Mammary epithelial cell (primary cell): ENCODE measurements at regions of chr17 and their contacts with region 1.

Region 1: DNA sequence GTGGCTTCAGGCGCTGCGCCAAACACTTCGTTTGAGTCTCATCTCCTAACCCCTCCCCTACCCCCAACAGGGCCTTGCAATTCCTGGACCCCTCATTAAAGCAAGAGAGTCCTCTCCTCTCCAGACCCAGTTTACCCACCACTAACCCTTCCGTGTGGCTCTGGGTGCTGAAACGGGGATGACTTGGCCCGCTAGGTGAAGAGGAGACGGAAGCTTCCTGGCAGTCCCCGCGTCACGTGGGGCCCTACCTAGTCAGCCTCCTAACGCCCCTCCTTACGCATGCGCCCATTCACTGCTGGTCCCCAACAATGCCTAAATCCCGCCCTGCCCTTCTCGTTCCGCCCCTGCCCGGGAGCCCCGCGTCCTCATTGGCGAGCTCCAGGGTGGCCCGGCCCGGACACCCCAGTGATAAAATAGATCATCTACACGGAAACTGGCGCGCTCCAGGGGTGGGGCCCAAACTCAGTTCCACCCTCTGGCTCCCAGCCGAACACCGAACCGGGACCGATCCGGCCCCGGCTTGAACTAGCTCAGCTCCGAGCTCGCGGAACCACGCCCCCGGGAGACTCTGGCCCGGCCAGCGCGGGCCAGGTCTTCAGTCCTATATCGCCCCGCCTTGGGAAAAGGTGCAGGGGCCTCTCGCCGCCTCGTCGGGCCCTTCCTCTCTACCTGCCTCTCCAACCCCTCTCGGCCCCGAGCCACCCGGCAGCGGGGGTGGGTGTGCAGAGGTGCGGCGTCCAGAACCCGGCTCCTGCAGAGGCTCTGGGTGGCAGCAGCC is at the start of gene SLC16A13:
- DNase-seq: peak; percentile 99
- H3K4me3 ChIP-seq: peak within 1 kb of the TSS; percentile 65 to 71 (median 70)
- H3K27ac ChIP-seq: peak within 1 kb of the TSS; percentile 81
- H3K4me1 ChIP-seq: peaks cover 12% of the 10 kb centered on the region
- H3K27me3 ChIP-seq: no peaks in the 10 kb centered on the region
- CTCF ChIP-seq: no peak
- total RNA-seq, gene SLC16A13: 2.7 to 11.9 TPM

Region 2: GRCh38 chr17:7072406-7072805 is 36.6 kb after region 1 on chr17:
- CTCF ChIA-PET with region 1: no interaction called
- dilution Hi-C with region 1: loop called (anchors 5 kb)
- in situ Hi-C with region 1: no loop called
- intact Hi-C with region 1: no loop called
- DNase-seq: no peak
- H3K4me3 ChIP-seq: no peak overlapping the region
- H3K27ac ChIP-seq: no peak overlapping the region
- H3K4me1 ChIP-seq: no peaks in the 10 kb centered on the region
- H3K27me3 ChIP-seq: no peaks in the 10 kb centered on the region
- CTCF ChIP-seq: no peak

Region 3: DNA sequence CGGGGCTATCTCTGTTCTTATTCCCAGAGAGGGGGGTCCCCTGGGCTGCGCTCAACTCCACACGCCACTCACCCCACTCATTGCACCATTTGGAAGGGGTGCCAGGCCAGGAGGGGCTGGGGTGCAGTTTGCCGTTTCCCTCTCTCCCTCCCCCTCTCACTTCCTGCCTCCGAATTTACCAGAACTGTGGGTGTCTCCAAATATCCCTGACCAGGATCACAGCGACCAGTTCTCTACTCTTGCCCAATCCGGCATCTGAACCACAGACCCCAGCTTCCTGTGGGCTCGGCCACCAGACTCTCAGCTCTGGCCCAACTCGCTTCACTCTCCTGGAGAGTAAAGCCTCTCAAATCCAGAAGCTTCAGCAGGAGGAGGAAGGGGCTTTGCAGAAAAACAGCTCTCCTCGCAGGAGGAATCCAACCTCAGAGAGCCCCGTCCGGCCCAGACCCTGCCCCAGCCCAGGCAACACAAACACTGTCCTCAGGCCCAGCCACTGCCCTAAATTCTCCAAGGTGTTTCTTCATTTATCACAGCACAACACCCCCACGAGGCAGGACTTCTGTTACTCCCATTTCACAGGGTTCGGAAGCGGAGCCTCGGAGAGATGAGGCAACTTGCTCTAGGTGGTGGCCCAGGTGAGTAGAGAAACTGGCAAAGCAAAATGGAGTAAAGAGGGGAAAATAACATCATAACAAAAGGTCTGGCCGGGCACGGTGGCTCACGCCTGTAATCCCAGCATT is 79.3 kb after region 1 on chr17:
- CTCF ChIA-PET with region 1: no interaction called
- dilution Hi-C with region 1: no loop called
- in situ Hi-C with region 1: no loop called
- intact Hi-C with region 1: no loop called
- DNase-seq: no peak
- H3K4me3 ChIP-seq: no peak overlapping the region
- H3K27ac ChIP-seq: no peak overlapping the region
- H3K4me1 ChIP-seq: no peaks in the 10 kb centered on the region
- H3K27me3 ChIP-seq: peaks cover 3% of the 10 kb centered on the region
- CTCF ChIP-seq: no peak